Mammary epithelial cell (primary cell): ENCODE measurements at regions of chr11 and their contacts with region 1.

Region 1: DNA sequence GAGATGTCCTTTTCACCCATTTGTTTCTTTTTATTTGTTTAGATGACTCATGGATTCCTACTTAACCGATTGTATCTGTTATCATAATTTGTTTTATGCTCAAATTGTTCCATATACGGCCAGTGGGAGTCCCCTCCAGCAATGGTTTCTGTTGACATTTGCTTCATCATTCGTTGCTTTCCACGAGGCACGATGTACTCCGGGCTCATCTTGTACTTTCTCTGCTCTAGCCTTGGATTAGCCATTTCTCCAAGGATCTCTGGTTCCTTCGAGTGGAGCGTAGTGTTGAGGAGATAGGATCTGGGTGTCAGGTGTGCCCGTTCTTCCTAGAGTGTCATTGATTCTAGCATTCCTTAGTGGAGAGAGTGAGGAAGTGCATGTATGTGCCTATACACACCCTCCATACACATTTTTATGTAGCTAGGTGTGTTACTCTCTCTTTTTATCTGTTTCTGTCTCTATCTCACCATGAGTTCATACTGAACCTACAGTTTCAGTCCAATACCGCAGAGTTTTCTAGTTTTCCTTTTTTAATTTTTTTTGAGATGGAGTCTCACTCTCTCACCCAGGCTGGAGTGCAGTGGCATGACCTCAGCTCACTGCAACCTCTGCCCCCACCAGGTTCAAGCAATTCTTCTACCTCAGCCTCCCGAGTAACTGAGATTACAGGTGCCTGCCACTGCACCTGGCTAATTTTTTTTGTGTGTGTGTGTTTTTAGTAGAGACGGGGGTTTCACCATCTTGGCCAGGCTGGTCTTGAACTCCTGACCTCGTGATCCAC is 31.3 kb downstream of the TECTA start:
- DNase-seq: no peak
- H3K4me3 ChIP-seq: no peak overlapping the region
- H3K27ac ChIP-seq: no peak overlapping the region
- H3K4me1 ChIP-seq: no peaks in the 10 kb centered on the region
- H3K27me3 ChIP-seq: peaks cover 2% of the 10 kb centered on the region
- CTCF ChIP-seq: no peak

Region 2: GRCh38 chr11:121207485-121208115 is 75.2 kb after region 1 on chr11:
- CTCF ChIA-PET with region 1: no interaction called
- dilution Hi-C with region 1: loop called (anchors 10 kb)
- in situ Hi-C with region 1: no loop called
- intact Hi-C with region 1: no loop called
- DNase-seq: no peak
- H3K4me3 ChIP-seq: no peak overlapping the region
- H3K27ac ChIP-seq: no peak overlapping the region
- H3K4me1 ChIP-seq: no peaks in the 10 kb centered on the region
- H3K27me3 ChIP-seq: peaks cover 6% of the 10 kb centered on the region
- CTCF ChIP-seq: no peak